Activated naive CD4-positive, alpha-beta T cell treated with anti-CD3 and anti-CD28 coated beads for 36 hours (primary cell): ENCODE measurements at regions of chr7 and their contacts with region 1.

Region 1: GRCh38 chr7:24665564-24666294 is 91.5 kb downstream of the GSDME start:
- DNase-seq: peak; percentile 71
- H3K4me3 Mint-ChIP-seq: no peak overlapping the region
- H3K27ac Mint-ChIP-seq: no peak overlapping the region
- H3K4me1 Mint-ChIP-seq: peaks cover 4% of the 10 kb centered on the region
- H3K27me3 Mint-ChIP-seq: no peaks in the 10 kb centered on the region

Region 2: GRCh38 chr7:23546897-23547572 is 1118.7 kb before region 1 on chr7:
- CTCF ChIA-PET with region 1: no interaction called
- intact Hi-C with region 1: loop called (anchors 10 kb)
- DNase-seq: peak; percentile 86
- H3K4me3 Mint-ChIP-seq: no peak overlapping the region
- H3K27ac Mint-ChIP-seq: no peak overlapping the region
- H3K4me1 Mint-ChIP-seq: peaks cover 5% of the 10 kb centered on the region
- H3K27me3 Mint-ChIP-seq: no peaks in the 10 kb centered on the region

Region 3: GRCh38 chr7:23863209-23863798 is 802.4 kb before region 1 on chr7:
- CTCF ChIA-PET with region 1: interaction called, 3 read pairs
- intact Hi-C with region 1: loop called (anchors 2 kb)
- DNase-seq: peak; percentile 46
- H3K4me3 Mint-ChIP-seq: no peak overlapping the region
- H3K27ac Mint-ChIP-seq: no peak overlapping the region
- H3K4me1 Mint-ChIP-seq: no peaks in the 10 kb centered on the region
- H3K27me3 Mint-ChIP-seq: peaks cover 8% of the 10 kb centered on the region

Region 4: GRCh38 chr7:24297362-24297761 is 368.4 kb before region 1 on chr7:
- CTCF ChIA-PET with region 1: no interaction called
- intact Hi-C with region 1: no loop called
- DNase-seq: no peak
- H3K4me3 Mint-ChIP-seq: no peak overlapping the region
- H3K27ac Mint-ChIP-seq: no peak overlapping the region
- H3K4me1 Mint-ChIP-seq: no peaks in the 10 kb centered on the region
- H3K27me3 Mint-ChIP-seq: peaks cover 4% of the 10 kb centered on the region

Region 5: DNA sequence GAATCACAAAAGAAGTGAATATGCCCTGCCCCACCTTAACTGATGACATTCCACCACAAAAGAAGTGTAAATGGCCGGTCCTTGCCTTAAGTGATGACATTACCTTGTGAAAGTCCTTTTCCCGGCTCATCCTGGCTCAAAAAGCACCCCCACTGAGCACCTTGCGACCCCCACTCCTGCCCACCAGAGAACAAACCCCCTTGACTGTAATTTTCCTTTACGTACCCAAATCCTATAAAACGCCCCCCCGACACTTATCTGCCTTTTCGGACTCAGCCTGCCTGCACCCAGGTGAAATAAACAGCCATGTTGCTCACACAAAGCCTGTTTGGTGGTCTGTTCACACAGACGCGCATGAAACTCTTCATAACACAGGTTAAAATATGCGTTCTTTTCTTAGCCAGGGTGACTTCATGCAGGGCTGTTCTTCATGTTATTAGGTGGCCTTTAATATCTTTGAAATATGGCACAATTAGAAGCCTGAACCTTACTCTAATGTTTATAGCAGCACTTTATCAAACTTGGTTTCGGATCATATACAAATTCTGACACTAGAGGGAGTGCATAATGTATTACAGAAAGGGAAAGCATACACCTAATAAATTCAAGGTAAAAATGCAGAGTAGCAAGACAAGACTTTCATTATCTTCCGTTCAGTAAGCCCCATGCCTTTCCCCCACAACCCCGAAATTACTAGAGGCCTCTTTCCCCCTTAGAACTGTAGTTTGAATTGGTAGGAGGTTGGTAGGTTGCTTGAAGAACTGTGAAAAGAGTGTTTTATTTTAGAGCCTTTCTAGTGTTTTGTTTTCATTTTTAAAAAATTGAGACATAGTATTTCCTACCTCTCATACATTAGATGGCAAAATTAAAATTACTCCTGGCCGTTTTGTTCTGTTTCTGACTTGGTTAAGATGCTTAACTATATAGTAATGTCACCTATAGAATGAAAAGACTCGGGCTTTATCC is 263.8 kb before region 1 on chr7:
- CTCF ChIA-PET with region 1: no interaction called
- intact Hi-C with region 1: loop called (anchors 1 kb)
- DNase-seq: no peak
- H3K4me3 Mint-ChIP-seq: no peak overlapping the region
- H3K27ac Mint-ChIP-seq: no peak overlapping the region
- H3K4me1 Mint-ChIP-seq: peaks cover 7% of the 10 kb centered on the region
- H3K27me3 Mint-ChIP-seq: no peaks in the 10 kb centered on the region

Region 6: GRCh38 chr7:25098096-25099046 is 432.6 kb after region 1 on chr7:
- CTCF ChIA-PET with region 1: interaction called, 4 read pairs
- intact Hi-C with region 1: loop called (anchors 5 kb)
- DNase-seq: peak; percentile 76
- H3K4me3 Mint-ChIP-seq: no peak overlapping the region
- H3K27ac Mint-ChIP-seq: no peak overlapping the region
- H3K4me1 Mint-ChIP-seq: peaks cover 7% of the 10 kb centered on the region
- H3K27me3 Mint-ChIP-seq: no peaks in the 10 kb centered on the region